ENCODE measurements at regions of chr11 and their contacts with region 1.

Region 1: GRCh38 chr11:19951558-19952115 is 208.6 kb downstream of the DBX1 start:
- DNase-seq: peak; percentile 81
- H3K4me3 ChIP-seq: no peak overlapping the region
- H3K27ac ChIP-seq: peak overlapping the region; percentile 40
- H3K4me1 ChIP-seq: peaks cover 27% of the 10 kb centered on the region
- H3K27me3 ChIP-seq: no peaks in the 10 kb centered on the region
- CTCF ChIP-seq: peak; percentile 33 to 50
- POLR2A ChIP-seq: no peak

Region 2: GRCh38 chr11:19553683-19554333 is 397.8 kb before region 1 on chr11:
- CTCF ChIA-PET with region 1: interaction called, 4 read pairs
- POLR2A ChIA-PET with region 1: no interaction called
- dilution Hi-C with region 1: no loop called
- intact Hi-C with region 1: loop called (anchors 1 kb)
- DNase-seq: peak; percentile 65
- H3K4me3 ChIP-seq: no peak overlapping the region
- H3K27ac ChIP-seq: no peak overlapping the region
- H3K4me1 ChIP-seq: no peaks in the 10 kb centered on the region
- H3K27me3 ChIP-seq: no peaks in the 10 kb centered on the region
- CTCF ChIP-seq: peak; percentile 79 to 81
- POLR2A ChIP-seq: no peak

Region 3: DNA sequence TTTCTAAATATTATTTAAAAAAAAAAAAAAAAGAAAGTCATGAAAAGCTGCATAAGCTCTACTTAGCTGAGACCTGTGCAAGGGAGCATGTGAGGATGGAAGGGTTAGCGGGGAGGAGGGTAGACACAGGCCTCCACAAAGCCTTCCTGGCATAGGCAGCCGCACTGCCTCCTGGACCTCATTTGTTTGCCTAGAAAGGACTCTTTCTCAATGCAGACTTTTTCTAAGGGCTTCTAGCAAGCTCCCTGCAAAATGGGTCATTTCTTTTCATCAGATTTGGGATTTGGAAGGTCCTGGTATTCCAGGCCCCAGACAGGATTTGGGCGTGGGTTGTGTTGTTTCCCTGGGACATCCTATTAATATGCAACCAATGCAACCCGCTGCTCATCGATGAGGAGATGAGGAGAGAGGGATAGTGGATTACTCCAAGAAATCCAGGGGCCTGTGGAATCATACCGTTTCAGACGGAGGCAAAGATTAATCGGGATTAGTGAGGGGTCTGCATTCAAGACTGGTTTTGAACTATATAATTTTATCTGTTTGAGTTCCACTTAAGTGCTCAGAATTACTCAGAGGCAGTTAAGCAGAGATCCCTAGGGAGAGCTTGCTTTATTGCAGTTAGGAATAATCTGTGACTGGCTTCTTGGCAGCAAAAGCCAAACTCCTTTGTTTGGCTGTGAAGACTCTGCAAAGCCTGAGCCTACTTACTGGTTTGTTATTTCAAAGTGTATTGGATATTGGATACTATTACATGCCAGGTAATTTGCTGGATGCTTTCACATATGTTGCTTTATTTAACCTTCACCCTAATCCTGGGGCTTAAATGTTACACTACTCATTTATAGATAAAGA is 345.9 kb before region 1 on chr11:
- CTCF ChIA-PET with region 1: no interaction called
- POLR2A ChIA-PET with region 1: no interaction called
- dilution Hi-C with region 1: no loop called
- intact Hi-C with region 1: no loop called
- DNase-seq: no peak
- H3K4me3 ChIP-seq: no peak overlapping the region
- H3K27ac ChIP-seq: no peak overlapping the region
- H3K4me1 ChIP-seq: peaks cover 8% of the 10 kb centered on the region
- H3K27me3 ChIP-seq: no peaks in the 10 kb centered on the region
- CTCF ChIP-seq: no peak
- POLR2A ChIP-seq: no peak

Region 4: GRCh38 chr11:19962801-19963175 is 11.2 kb after region 1 on chr11:
- CTCF ChIA-PET with region 1: interaction called, 23 read pairs
- POLR2A ChIA-PET with region 1: no interaction called
- dilution Hi-C with region 1: no loop called
- intact Hi-C with region 1: no loop called
- DNase-seq: no peak
- H3K4me3 ChIP-seq: no peak overlapping the region
- H3K27ac ChIP-seq: no peak overlapping the region
- H3K4me1 ChIP-seq: peaks cover 6% of the 10 kb centered on the region
- H3K27me3 ChIP-seq: no peaks in the 10 kb centered on the region
- CTCF ChIP-seq: no peak
- POLR2A ChIP-seq: no peak

Region 5: GRCh38 chr11:20022363-20023081 is 70.9 kb after region 1 on chr11:
- CTCF ChIA-PET with region 1: interaction called, 11 read pairs
- POLR2A ChIA-PET with region 1: no interaction called
- dilution Hi-C with region 1: no loop called
- intact Hi-C with region 1: no loop called
- DNase-seq: peak; percentile 90
- H3K4me3 ChIP-seq: peak overlapping the region in 1 of 3 experiments; percentile 13
- H3K27ac ChIP-seq: peak overlapping the region; percentile 88
- H3K4me1 ChIP-seq: peaks cover 25% of the 10 kb centered on the region
- H3K27me3 ChIP-seq: no peaks in the 10 kb centered on the region
- CTCF ChIP-seq: no peak
- POLR2A ChIP-seq: no peak

Region 6: GRCh38 chr11:20097319-20098221 is 145.9 kb after region 1 on chr11:
- CTCF ChIA-PET with region 1: interaction called, 8 read pairs
- POLR2A ChIA-PET with region 1: no interaction called
- dilution Hi-C with region 1: no loop called
- intact Hi-C with region 1: loop called (anchors 1 kb)
- DNase-seq: peak; percentile 99
- H3K4me3 ChIP-seq: peak overlapping the region in 1 of 3 experiments; percentile 1
- H3K27ac ChIP-seq: peak overlapping the region; percentile 94
- H3K4me1 ChIP-seq: peaks cover 64% of the 10 kb centered on the region
- H3K27me3 ChIP-seq: no peaks in the 10 kb centered on the region
- CTCF ChIP-seq: no peak
- POLR2A ChIP-seq: peak; percentile 34

Region 7: GRCh38 chr11:20337526-20338154 is 386.0 kb after region 1 on chr11:
- CTCF ChIA-PET with region 1: no interaction called
- POLR2A ChIA-PET with region 1: no interaction called
- dilution Hi-C with region 1: no loop called
- intact Hi-C with region 1: loop called (anchors 5 kb)
- DNase-seq: peak; percentile 43
- H3K4me3 ChIP-seq: no peak overlapping the region
- H3K27ac ChIP-seq: no peak overlapping the region
- H3K4me1 ChIP-seq: no peaks in the 10 kb centered on the region
- H3K27me3 ChIP-seq: peaks cover 28 to 63% of the 10 kb centered on the region in 2 experiments
- CTCF ChIP-seq: peak; percentile 13 to 47
- POLR2A ChIP-seq: no peak

Measured in endothelial cell of umbilical vein (primary cell).